Activated T-helper 1 cell treated with anti-CD3 and anti-CD28 coated beads, Interleukin-12 subunit alpha, Interleukin-12 subunit beta, Interleukin-2, Interleukin-4 antibody, amounts not matched to agents 30 ng/mL and 10 ng/mL and 1 ng/mL, durations not matched to agents 14 hours and 24 hours and 36 hours (primary cell): ENCODE measurements at regions of chr1 and their contacts with region 1.

Region 1: GRCh38 chr1:234610348-234611152 is 572 bp upstream of the IRF2BP2 start:
- DNase-seq: peak; percentile 90
- H3K4me3 Mint-ChIP-seq: peak overlapping the region; percentile 92
- H3K27ac Mint-ChIP-seq: peak overlapping the region; percentile 99
- H3K4me1 Mint-ChIP-seq: peaks cover 49% of the 10 kb centered on the region
- H3K27me3 Mint-ChIP-seq: no peaks in the 10 kb centered on the region

Region 2: DNA sequence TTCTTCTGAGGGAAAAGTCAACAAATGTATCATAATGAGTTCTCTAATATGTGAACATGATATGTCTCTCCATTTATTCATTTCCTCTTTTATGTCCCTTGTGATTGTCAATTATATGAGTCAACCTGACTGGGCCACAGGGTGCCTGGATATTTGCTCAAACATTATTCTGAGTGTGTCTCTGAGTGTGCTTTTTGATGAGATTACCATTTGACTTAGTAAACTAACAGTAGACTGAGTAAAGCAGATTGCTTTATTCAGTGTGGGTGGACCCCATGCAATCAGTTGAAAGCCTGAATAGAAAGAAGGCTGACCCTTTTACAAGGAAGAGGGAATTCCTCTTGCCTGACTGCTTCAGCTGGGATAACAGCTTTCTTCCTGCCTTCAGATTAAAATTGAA is 563.4 kb before region 1 on chr1:
- intact Hi-C with region 1: no loop called
- DNase-seq: no peak
- H3K4me3 Mint-ChIP-seq: no peak overlapping the region
- H3K27ac Mint-ChIP-seq: no peak overlapping the region
- H3K4me1 Mint-ChIP-seq: no peaks in the 10 kb centered on the region
- H3K27me3 Mint-ChIP-seq: peaks cover 6% of the 10 kb centered on the region

Region 3: GRCh38 chr1:234452091-234452954 is 158.2 kb before region 1 on chr1:
- intact Hi-C with region 1: no loop called
- DNase-seq: no peak
- H3K4me3 Mint-ChIP-seq: no peak overlapping the region
- H3K27ac Mint-ChIP-seq: peak overlapping the region; percentile 50
- H3K4me1 Mint-ChIP-seq: peaks cover 14% of the 10 kb centered on the region
- H3K27me3 Mint-ChIP-seq: no peaks in the 10 kb centered on the region

Region 4: GRCh38 chr1:234589064-234589800 is 21.3 kb before region 1 on chr1:
- intact Hi-C with region 1: no loop called
- DNase-seq: no peak
- H3K4me3 Mint-ChIP-seq: no peak overlapping the region
- H3K27ac Mint-ChIP-seq: no peak overlapping the region
- H3K4me1 Mint-ChIP-seq: peaks cover 8% of the 10 kb centered on the region
- H3K27me3 Mint-ChIP-seq: peaks cover 2% of the 10 kb centered on the region

Region 5: GRCh38 chr1:234599617-234600417 is 10.7 kb before region 1 on chr1:
- intact Hi-C with region 1: loop called (anchors 1 kb)
- DNase-seq: peak; percentile 69
- H3K4me3 Mint-ChIP-seq: peak overlapping the region; percentile 88
- H3K27ac Mint-ChIP-seq: peak overlapping the region; percentile 96
- H3K4me1 Mint-ChIP-seq: peaks cover 56% of the 10 kb centered on the region
- H3K27me3 Mint-ChIP-seq: no peaks in the 10 kb centered on the region

Region 6: GRCh38 chr1:234772345-234773147 is 162.0 kb after region 1 on chr1:
- intact Hi-C with region 1: loop called (anchors 1 kb)
- DNase-seq: peak; percentile 83
- H3K4me3 Mint-ChIP-seq: peak overlapping the region; percentile 80
- H3K27ac Mint-ChIP-seq: peak overlapping the region; percentile 100
- H3K4me1 Mint-ChIP-seq: peaks cover 56% of the 10 kb centered on the region
- H3K27me3 Mint-ChIP-seq: no peaks in the 10 kb centered on the region

Region 7: DNA sequence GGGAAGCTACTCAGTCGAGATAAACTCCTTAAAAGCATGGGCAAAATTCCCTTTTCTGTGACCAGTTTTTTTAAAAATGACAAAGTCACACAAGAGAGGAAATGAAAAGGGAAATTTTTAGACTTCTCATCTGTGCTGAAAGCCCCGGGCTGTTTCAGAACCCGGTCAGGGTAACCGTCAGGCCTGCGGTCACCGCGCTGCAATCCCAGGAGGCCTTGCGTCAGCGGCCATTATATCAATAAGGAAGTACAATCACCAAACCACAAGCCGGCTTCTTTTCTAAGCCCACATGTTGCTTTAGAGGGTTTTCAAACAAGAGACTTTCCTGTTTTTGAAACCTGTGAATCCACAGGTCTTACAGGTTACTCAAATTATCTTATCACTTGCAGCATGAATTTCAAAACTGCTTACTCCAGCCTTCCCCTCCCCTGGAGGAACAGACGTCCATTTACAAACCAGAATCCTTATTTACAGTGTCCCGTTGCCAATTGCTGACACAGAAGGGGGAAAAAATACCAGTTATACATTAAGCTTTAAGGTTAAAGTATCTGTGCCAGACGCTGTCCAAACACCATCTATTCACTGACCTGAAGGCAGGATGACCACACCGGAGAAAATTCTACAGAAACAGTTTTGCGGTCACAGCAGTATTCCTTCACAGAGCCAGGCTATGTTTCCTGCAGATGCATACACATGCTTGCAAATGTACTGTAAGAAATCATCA is 352.8 kb after region 1 on chr1:
- intact Hi-C with region 1: loop called (anchors 1 kb)
- DNase-seq: peak; percentile 87
- H3K4me3 Mint-ChIP-seq: peak overlapping the region; percentile 73
- H3K27ac Mint-ChIP-seq: peak overlapping the region; percentile 93
- H3K4me1 Mint-ChIP-seq: peaks cover 76% of the 10 kb centered on the region
- H3K27me3 Mint-ChIP-seq: no peaks in the 10 kb centered on the region

Region 8: DNA sequence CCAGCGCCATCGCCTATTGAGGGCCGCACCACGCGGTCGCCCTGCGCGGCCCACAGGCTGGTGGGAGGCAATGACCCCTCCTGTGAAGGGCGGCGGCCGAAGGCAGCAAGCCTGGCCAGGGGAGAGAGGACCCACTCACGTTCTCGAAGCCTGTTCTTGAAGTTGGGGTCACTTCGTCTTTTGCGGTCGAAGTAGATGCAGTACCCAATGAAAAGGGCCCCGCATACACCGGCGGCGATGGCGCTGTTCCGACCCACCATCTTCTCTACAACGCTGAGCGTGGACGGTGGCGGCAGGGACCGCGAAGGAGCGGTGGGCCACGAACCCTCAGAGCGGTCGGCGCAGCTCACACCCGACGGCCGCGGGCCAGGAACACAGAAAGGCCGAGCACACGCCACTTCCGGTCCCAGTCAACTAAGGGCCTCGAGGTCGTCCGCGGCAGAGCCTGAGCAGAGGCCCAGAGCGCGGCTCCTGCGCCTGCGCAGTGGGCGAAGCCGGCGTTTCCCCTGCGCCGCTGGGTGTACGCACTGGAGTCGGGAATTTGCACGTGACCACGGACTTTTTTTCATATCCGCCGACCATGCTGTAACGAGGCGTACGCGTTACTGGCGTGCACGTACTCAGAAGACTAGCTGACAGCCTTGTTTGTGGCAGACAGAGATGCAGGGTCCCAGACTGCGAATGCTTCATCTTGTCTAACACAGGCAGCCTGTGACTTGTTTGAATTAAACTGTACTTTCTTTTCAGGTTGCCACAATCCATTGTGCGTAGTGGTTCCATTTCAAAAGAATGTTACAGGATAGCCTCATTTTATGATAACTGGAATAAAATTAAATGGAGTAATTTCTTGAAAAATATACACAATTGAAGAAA is 518.1 kb after region 1 on chr1 and contains the start of gene TOMM20:
- intact Hi-C with region 1: loop called (anchors 1 kb)
- DNase-seq: peak; percentile 94
- H3K4me3 Mint-ChIP-seq: peak within 1 kb of the TSS; percentile 99
- H3K27ac Mint-ChIP-seq: peak within 1 kb of the TSS; percentile 94
- H3K4me1 Mint-ChIP-seq: peaks cover 45% of the 10 kb centered on the region
- H3K27me3 Mint-ChIP-seq: no peaks in the 10 kb centered on the region
- total RNA-seq, gene TOMM20: 112 and 137 TPM in 2 replicates